WTC11 (cell line): ENCODE measurements at regions of chr1 and their contacts with region 1.

Region 1: DNA sequence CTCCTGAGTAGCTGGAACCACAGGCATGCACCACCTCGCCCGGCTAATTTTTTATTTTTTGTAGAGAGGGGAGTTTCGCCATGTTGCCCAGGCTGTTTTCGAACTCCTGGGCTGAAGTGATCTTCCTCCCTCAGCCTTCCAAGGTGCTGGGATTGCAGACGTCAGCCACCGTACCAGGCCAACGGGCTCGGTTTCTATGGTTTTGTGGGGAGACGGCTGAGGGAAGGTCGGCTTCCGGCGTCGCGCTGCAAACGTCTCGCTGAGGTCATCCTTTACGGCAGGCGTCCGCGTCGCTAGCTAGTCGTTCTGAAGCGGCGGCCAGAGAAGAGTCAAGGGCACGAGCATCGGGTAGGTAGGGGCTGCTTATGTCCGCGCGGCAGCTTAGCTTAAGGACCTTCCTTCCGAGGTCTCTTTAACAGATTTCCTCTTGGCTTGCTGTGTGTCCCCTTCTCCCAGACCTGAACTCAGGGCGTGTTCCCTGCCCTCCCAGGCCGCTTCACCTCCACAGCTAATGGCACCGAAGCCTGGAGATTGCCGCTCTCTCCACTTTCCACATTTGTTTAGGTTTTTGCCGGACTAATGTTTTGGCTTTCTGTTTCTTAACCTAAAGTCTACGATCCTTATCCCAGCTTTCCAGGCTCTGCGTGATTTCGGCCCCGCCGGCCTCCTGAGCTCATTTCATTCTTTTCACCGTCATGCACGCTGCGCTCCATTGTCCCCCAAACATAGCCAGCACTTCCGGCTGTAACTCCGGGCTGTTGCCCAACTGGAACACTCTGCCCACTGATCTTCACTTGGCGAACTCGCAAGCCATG is at the start of gene NDUFS5:
- DNase-seq: peak; percentile 88
- ATAC-seq: peak; percentile 92
- H3K4me3 Mint-ChIP-seq: peak within 1 kb of the TSS; percentile 94
- H3K27ac Mint-ChIP-seq: peak within 1 kb of the TSS; percentile 100
- H3K4me1 Mint-ChIP-seq: peaks cover 9% of the 10 kb centered on the region
- H3K27me3 Mint-ChIP-seq: peaks cover 3% of the 10 kb centered on the region; the same call in 1 of the 2 replicates
- CTCF ChIP-seq: no peak
- total RNA-seq, gene NDUFS5: 402 to 430 TPM (median 414 TPM) in 3 replicates

Region 2: DNA sequence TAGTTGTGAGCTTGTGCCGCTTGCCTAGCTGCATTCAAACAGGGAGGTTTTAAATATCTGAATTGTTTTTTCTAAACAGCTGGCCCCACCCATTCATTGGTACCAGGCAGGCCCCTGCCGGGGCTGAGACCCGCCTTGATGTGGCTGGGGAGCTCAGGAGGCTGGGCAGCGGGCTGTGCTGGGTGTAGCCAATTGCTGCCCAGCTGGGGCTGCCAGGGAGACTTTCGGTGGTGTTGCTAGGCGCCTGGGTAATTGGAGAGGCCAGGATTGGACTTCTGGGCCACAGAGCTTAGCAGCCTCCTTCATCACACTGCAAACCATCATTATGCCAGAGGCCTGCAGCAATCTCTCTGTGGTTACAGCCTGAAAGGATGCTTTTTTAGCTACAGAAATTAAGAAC is 96.8 kb before region 1 on chr1:
- CTCF ChIA-PET with region 1: no interaction called
- POLR2A ChIA-PET with region 1: no interaction called
- DNase-seq: no peak
- ATAC-seq: peak; percentile 87
- H3K4me3 Mint-ChIP-seq: no peak overlapping the region
- H3K27ac Mint-ChIP-seq: no peak overlapping the region; the same call in 1 of the 2 replicates
- H3K4me1 Mint-ChIP-seq: peaks cover 5% of the 10 kb centered on the region
- H3K27me3 Mint-ChIP-seq: no peaks in the 10 kb centered on the region
- CTCF ChIP-seq: no peak

Region 3: DNA sequence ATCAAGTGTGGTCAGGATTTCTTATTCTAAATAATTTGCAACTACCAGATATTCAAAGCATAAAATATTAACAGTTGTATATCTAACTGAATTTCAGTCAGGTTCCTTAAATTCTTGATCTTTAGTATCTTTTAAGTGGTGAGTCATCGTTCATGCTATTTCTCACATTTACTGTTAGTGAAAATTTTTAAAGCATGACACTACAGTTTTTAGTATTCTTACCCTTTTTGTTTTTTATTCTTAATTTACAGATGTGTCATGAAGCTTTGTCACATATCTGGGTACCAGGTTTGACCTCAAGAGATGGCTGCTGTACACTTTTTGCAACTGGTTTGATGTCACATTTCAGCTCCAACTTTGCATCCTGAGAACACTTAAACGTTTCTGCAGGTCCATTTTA is 22.5 kb before region 1 on chr1:
- CTCF ChIA-PET with region 1: interaction called, 8 read pairs
- POLR2A ChIA-PET with region 1: interaction called, 12 read pairs
- DNase-seq: no peak
- ATAC-seq: no peak
- H3K4me3 Mint-ChIP-seq: no peak overlapping the region
- H3K27ac Mint-ChIP-seq: peak overlapping the region; percentile 98
- H3K4me1 Mint-ChIP-seq: peaks cover 71% of the 10 kb centered on the region
- H3K27me3 Mint-ChIP-seq: no peaks in the 10 kb centered on the region
- CTCF ChIP-seq: no peak

Region 4: GRCh38 chr1:39167632-39168209 is 141.5 kb after region 1 on chr1:
- CTCF ChIA-PET with region 1: no interaction called
- POLR2A ChIA-PET with region 1: no interaction called
- DNase-seq: no peak
- ATAC-seq: no peak
- H3K4me3 Mint-ChIP-seq: no peak overlapping the region
- H3K27ac Mint-ChIP-seq: peak overlapping the region; percentile 66
- H3K4me1 Mint-ChIP-seq: peaks cover 76% of the 10 kb centered on the region
- H3K27me3 Mint-ChIP-seq: no peaks in the 10 kb centered on the region
- CTCF ChIP-seq: no peak